OCI-LY7 (cell line): ENCODE measurements at regions of chr1 and their contacts with region 1.

Region 1: DNA sequence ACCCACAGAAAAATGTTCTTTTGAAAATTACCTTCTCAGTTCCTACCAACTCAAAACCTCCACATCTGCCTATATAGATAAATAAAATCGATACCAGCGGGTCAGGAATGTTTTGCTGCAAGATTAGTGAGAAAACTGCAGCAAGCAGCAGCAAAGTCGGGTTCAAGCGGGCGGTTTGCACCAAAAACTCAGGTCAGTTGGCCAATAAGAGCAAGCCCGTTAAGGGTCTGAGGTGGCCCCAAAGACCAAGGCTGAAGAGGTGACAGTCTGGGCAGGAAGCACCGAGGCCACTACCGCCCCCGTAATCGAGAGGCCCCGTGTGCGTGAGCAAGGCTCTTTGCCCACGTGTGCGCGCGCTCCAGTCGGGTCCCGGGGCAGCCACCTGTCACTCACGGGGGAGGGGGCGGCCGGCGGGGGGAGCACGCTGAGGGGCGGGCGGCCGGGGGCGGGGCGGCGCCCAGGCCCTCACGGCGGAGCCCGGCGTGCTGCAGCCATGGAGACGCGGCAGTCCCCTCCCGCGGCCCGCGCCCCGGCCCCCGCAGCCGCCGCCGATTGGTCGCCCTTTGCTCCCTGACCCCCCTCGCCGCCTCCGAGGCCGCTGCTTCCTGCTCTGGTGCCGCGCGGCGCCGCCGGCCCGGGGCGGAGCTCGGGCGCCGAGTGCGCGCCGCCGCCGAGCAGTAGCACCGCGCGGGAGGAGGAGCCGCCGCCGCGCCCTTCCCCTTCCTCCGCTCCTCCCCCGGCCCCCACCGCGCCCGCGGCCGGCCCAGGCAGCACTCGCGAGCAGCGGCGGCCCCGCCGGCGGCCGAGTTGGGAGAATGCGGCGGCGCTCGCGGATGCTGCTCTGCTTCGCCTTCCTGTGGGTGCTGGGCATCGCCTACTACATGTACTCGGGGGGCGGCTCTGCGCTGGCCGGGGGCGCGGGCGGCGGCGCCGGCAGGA is at the start of gene GALNT2:
- DNase-seq: peak; percentile 93
- H3K4me3 ChIP-seq: peak within 1 kb of the TSS; percentile 92
- H3K27ac ChIP-seq: peak within 1 kb of the TSS; percentile 53
- H3K4me1 ChIP-seq: peaks cover 26% of the 10 kb centered on the region
- CTCF ChIP-seq: no peak
- total RNA-seq, gene GALNT2: 26.3 and 29.9 TPM in 2 replicates

Region 2: DNA sequence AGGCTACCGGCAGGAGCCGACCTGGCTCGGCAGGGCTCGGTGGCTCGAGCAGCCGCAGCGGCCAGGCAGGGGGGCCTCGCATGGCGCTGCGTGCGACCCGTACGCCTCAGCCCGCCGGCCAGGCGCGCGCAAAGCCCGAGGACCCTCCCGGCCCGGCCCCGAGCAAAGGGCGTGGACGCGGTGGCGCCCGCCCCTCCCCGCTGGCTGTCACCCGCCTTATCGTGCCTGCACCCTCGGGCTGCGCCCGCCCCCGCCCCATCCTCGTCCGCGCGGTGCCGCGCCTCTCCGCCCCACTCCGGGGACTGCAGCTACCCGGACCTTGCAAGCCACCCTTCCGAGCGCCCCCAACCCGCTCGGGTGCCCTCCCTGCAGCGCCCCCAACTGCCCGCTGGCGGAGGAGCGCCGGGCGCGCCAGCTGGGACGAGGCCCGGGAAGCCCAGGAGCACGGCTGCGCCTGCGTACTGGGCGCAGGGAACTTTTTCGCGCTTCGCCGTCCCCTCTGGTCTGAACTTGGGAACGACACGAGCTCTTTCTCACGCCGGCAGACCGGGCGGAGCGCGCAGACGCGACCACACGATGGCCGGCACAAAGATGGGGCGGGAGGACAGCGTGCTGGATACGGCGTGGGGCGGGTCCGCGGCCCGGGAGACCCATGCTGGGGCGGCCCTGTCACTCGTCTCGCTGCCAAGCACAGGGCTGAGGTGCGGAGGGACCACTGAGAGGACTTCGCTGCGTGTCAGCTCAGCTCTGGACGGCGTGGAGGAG is 508.0 kb before region 1 on chr1 and contains the start of gene ABCB10:
- CTCF ChIA-PET with region 1: no interaction called
- POLR2A ChIA-PET with region 1: no interaction called
- intact Hi-C with region 1: loop called (anchors 2 kb)
- DNase-seq: peak; percentile 98
- H3K4me3 ChIP-seq: peak within 1 kb of the TSS; percentile 79
- H3K27ac ChIP-seq: peak within 1 kb of the TSS; percentile 52
- H3K4me1 ChIP-seq: peaks cover 17% of the 10 kb centered on the region
- CTCF ChIP-seq: peak; percentile 80
- total RNA-seq, gene ABCB10: 14.1 and 16.4 TPM in 2 replicates

Region 3: DNA sequence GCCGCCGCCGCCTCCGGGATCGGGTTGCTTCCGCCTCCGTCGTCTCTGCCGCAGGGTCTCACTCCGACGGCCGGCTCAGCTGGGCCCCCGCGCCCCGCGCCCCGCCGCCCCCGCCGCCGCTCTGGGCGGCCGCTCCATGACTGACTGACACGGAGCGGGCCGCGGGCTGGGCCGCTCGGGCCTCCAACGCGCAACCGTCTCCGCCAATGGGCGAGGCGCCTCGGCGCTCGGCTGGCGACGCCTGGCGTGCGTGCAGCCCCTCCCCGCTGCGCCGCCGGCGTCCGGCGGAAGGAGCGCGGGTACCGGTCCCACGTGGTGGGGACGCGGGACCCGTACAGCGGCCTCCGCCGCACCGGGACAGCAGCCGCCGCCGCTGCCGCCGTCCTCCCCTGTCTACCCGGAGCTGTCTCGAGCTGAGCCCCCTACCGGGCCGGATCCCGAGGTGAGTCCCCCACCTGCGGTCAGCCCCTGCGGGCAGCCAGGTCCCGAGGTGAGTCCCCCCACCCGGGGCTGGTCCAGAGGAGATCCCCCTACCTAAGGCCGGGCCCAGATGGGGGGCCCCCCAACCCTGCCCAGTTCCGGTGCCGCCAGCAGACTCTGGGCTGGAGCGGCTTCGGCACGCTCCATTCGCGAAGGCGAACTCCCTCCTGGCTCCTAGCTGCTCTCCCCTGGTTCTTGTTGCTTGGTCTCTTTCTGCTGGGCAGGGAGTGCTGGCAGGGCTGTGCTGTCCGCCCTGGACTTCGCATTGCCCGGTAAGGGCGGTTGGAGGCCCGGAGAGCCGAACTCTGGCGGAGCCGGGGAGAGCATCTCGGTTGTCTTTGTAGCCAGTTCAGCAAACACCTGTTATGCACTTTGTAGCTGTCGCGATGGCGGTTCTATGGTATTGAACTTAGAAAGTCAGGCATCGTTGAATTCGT is 440.6 kb before region 1 on chr1 and contains the starts of genes TAF5L and URB2:
- CTCF ChIA-PET with region 1: no interaction called
- POLR2A ChIA-PET with region 1: no interaction called
- intact Hi-C with region 1: loop called (anchors 1 kb)
- DNase-seq: peak; percentile 92
- H3K4me3 ChIP-seq: peak within 1 kb of the TSS; percentile 91
- H3K27ac ChIP-seq: peak within 1 kb of the TSS; percentile 57
- H3K4me1 ChIP-seq: peaks cover 30% of the 10 kb centered on the region
- CTCF ChIP-seq: no peak
- total RNA-seq, gene TAF5L: 23.5 and 32.9 TPM in 2 replicates
- total RNA-seq, gene URB2: 27.0 and 30.2 TPM in 2 replicates

Region 4: GRCh38 chr1:230149751-230150584 is 83.2 kb after region 1 on chr1:
- CTCF ChIA-PET with region 1: no interaction called
- POLR2A ChIA-PET with region 1: interaction called, 5 read pairs
- intact Hi-C with region 1: loop called (anchors 2 kb)
- DNase-seq: peak; percentile 82
- H3K4me3 ChIP-seq: peak overlapping the region; percentile 59
- H3K27ac ChIP-seq: peak overlapping the region; percentile 95
- H3K4me1 ChIP-seq: peaks cover 68% of the 10 kb centered on the region
- CTCF ChIP-seq: peak; percentile 41; the same call in 1 of the 2 replicates

Region 5: GRCh38 chr1:230235876-230236275 is 169.1 kb after region 1 on chr1:
- CTCF ChIA-PET with region 1: interaction called, 12 read pairs
- POLR2A ChIA-PET with region 1: interaction called, 8 read pairs
- intact Hi-C with region 1: no loop called
- DNase-seq: no peak
- H3K4me3 ChIP-seq: no peak overlapping the region
- H3K27ac ChIP-seq: no peak overlapping the region
- H3K4me1 ChIP-seq: no peaks in the 10 kb centered on the region
- CTCF ChIP-seq: no peak

Region 6: DNA sequence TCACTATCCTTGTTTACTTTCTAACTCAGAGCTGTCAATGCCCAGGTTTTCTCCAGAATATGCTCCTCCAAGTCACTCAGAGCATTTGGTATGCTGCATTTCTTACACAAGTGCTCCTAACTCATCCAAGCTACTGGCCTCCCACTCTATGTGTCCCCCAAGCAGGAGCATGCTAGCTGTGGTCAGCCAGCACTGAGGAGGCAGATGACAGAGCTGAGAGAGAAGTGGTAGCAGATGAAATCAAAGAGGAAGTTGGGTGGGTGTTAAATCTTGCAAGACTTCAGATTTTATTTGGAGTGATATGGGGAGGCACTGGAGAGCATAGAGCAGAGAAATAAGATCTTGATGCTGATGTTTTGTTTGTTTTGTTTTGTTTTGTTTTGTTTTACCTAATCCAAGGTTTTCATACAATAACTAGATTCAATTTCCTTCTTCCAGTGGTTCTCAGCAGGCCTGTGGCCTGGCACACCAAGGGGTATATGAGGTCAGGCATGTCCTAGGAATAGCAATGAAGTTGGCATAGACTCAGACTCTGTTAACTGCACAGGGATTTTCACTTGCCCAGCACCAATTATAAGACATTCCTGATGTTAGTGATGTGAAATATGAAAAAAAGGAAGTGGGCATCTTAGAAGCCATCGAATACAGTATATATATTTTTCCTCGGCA is 362.5 kb after region 1 on chr1:
- CTCF ChIA-PET with region 1: no interaction called
- POLR2A ChIA-PET with region 1: no interaction called
- intact Hi-C with region 1: no loop called
- DNase-seq: no peak
- H3K4me3 ChIP-seq: no peak overlapping the region
- H3K27ac ChIP-seq: no peak overlapping the region
- H3K4me1 ChIP-seq: no peaks in the 10 kb centered on the region
- CTCF ChIP-seq: no peak